MCF 10A (cell line): ENCODE measurements at regions of chr5 and their contacts with region 1.

Region 1: GRCh38 chr5:126519634-126520592 is 75.1 kb downstream of the ALDH7A1 start:
- DNase-seq: no peak
- H3K4me3 Mint-ChIP-seq: no peak overlapping the region
- H3K27ac Mint-ChIP-seq: peak overlapping the region; percentile 68
- H3K4me1 Mint-ChIP-seq: peaks cover 26% of the 10 kb centered on the region
- H3K27me3 Mint-ChIP-seq: no peaks in the 10 kb centered on the region
- CTCF ChIP-seq: no peak

Region 2: GRCh38 chr5:126248611-126249010 is 271.3 kb before region 1 on chr5:
- CTCF ChIA-PET with region 1: no interaction called
- POLR2A ChIA-PET with region 1: no interaction called
- intact Hi-C with region 1: no loop called
- DNase-seq: no peak
- H3K4me3 Mint-ChIP-seq: no peak overlapping the region
- H3K27ac Mint-ChIP-seq: no peak overlapping the region
- H3K4me1 Mint-ChIP-seq: no peaks in the 10 kb centered on the region
- H3K27me3 Mint-ChIP-seq: no peaks in the 10 kb centered on the region
- CTCF ChIP-seq: no peak

Region 3: DNA sequence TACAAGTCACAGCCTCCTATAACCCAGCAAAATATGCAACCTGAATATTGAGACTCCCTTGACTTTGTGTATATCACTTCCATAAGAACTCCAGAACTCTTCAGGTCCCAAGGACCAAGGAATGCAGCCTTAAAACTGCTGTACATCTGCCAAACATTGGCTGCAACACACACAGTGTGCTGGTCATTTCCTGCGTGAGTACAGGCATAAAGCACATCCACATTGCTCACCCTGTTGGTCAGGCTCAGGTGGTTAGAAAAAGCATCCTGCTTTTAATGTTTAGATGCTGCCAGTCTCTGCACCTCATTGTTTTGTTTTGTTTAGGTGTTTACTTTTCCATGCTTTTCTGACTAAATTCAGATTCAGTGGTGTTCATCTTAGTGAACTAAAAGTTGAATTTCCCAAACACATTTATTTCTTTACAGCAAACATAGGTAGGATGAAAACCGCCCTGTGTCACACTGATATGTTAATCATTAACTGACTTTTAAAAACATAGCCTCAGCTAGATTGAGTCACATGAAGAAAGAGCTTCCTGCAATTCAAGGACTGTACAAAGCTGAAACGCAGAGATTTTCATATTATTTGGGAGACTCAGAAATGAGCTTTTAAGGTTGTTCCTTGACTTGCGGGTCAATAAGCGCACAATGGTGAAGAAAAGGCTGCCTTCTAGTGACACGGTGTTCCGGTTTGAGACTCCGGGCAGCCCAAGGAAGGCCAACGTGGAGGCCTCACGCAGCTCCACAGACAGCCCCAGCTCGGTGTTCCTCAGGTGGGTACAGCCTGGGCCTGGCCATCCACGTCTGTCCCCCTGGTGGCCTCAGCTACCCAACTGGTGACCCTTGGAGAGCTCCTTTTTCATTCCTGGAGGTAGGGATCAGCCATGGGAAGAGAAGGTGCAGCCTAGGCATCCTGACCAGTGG is 148.9 kb before region 1 on chr5:
- CTCF ChIA-PET with region 1: interaction called, 4 read pairs
- POLR2A ChIA-PET with region 1: interaction called, 21 read pairs
- intact Hi-C with region 1: no loop called
- DNase-seq: peak; percentile 50
- H3K4me3 Mint-ChIP-seq: no peak overlapping the region
- H3K27ac Mint-ChIP-seq: no peak overlapping the region
- H3K4me1 Mint-ChIP-seq: peaks cover 27% of the 10 kb centered on the region
- H3K27me3 Mint-ChIP-seq: no peaks in the 10 kb centered on the region
- CTCF ChIP-seq: peak; percentile 7

Region 4: GRCh38 chr5:126449751-126450271 is 70.1 kb before region 1 on chr5:
- CTCF ChIA-PET with region 1: no interaction called
- POLR2A ChIA-PET with region 1: interaction called, 10 read pairs
- intact Hi-C with region 1: no loop called
- DNase-seq: peak; percentile 92
- H3K4me3 Mint-ChIP-seq: peak overlapping the region; percentile 68
- H3K27ac Mint-ChIP-seq: peak overlapping the region; percentile 99
- H3K4me1 Mint-ChIP-seq: peaks cover 62% of the 10 kb centered on the region
- H3K27me3 Mint-ChIP-seq: no peaks in the 10 kb centered on the region
- CTCF ChIP-seq: no peak

Region 5: DNA sequence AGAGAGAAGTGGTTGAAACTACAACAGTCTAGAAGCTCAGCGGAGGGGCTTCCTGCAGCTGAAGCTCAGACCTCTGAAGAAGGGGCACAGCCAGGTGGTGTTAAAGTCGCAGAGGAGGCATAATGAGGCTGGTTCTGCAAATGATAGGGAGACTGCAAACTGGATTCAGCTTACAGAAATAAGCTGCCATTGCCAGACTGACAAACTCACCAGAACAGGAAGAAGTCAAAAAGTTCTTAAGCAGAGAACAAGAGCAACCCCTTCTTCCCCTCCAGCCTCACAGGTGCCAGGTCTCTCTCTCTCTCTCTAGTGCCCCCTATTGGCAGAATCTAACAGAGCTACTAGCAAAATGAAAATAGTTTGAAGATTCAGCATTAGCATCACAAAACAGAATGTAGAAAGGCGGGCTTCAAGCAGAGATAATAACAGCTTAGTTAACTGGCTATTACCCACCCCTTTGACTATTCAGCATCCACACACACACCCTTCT is 20.0 kb before region 1 on chr5:
- CTCF ChIA-PET with region 1: interaction called, 11 read pairs
- POLR2A ChIA-PET with region 1: interaction called, 23 read pairs
- intact Hi-C with region 1: no loop called
- DNase-seq: peak; percentile 62
- H3K4me3 Mint-ChIP-seq: no peak overlapping the region
- H3K27ac Mint-ChIP-seq: no peak overlapping the region
- H3K4me1 Mint-ChIP-seq: peaks cover 28% of the 10 kb centered on the region
- H3K27me3 Mint-ChIP-seq: no peaks in the 10 kb centered on the region
- CTCF ChIP-seq: peak; percentile 51

Region 6: GRCh38 chr5:126531543-126532120 is 11.7 kb after region 1 on chr5:
- CTCF ChIA-PET with region 1: interaction called, 9 read pairs
- POLR2A ChIA-PET with region 1: interaction called, 14 read pairs
- intact Hi-C with region 1: no loop called
- DNase-seq: no peak
- H3K4me3 Mint-ChIP-seq: no peak overlapping the region
- H3K27ac Mint-ChIP-seq: no peak overlapping the region
- H3K4me1 Mint-ChIP-seq: peaks cover 1% of the 10 kb centered on the region
- H3K27me3 Mint-ChIP-seq: no peaks in the 10 kb centered on the region
- CTCF ChIP-seq: no peak

Region 7: DNA sequence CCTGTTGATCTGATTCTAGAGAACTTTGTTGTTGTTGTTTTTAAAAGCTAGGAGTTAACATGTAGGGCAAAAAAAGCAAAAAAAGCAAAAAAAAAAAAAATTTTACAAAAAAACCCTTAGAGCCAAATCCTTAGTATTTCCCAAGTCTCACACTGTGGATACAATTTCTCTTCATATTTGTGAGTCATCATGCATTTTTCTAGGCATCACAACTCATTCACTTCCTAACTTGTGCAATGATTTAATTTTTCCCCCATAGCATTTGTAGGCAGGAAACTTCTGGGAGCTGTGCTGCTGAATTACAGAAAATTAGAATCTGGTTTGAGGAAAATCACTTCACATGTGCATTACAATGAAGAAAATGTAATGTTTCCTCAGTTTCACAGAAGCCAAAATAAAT is 418.6 kb after region 1 on chr5:
- CTCF ChIA-PET with region 1: no interaction called
- POLR2A ChIA-PET with region 1: no interaction called
- intact Hi-C with region 1: no loop called
- DNase-seq: peak; percentile 86
- H3K4me3 Mint-ChIP-seq: no peak overlapping the region
- H3K27ac Mint-ChIP-seq: peak overlapping the region; percentile 46
- H3K4me1 Mint-ChIP-seq: peaks cover 19% of the 10 kb centered on the region
- H3K27me3 Mint-ChIP-seq: no peaks in the 10 kb centered on the region
- CTCF ChIP-seq: no peak